Heart right ventricle (tissue), 16 donors: ENCODE measurements at regions of chr12 and their contacts with region 1.

Region 1: GRCh38 chr12:11202811-11203210 is 16.1 kb upstream of the TAS2R42 start:
- DNase-seq: no peak
- ATAC-seq: no peak
- H3K4me3 ChIP-seq: no peak overlapping the region
- H3K27ac ChIP-seq: no peak overlapping the region
- H3K4me1 ChIP-seq: no peaks in the 10 kb centered on the region
- H3K27me3 ChIP-seq: no peaks in the 10 kb centered on the region
- CTCF ChIP-seq: no peak

Region 2: DNA sequence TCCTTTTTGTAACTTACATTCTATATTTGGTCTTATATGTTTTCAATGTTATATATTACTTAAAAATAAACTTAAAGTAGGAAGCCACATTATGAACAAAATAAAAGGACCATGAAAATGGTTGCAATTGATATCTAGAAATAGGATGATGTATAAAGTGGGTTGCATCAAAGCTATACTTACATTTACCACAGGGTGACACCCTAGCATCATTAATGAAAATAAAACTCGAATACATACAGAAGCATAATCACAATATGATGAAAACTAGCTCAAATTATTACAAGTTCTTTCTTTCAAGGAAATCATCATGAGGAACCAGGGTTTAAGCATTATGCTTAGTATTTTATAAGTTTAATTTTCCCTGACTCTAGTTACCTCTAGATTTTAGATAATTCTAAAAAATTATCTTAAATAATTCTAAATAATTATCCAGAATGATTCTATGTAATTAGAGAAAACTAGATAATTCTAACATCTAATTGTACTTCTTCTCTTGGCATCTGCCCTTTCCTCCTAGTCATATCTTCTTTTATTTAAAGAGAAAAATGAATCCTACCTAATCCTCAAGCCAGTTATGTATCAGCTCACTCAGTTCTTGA is 431.6 kb before region 1 on chr12:
- intact Hi-C with region 1: loop called (anchors 2 to 5 kb)
- DNase-seq: no peak
- ATAC-seq: peak in 2 of 8 donors; percentile 51 to 64
- H3K4me3 ChIP-seq: no peak overlapping the region
- H3K27ac ChIP-seq: no peak overlapping the region
- H3K4me1 ChIP-seq: no peaks in the 10 kb centered on the region
- H3K27me3 ChIP-seq: peaks cover 0 to 74% (median 54%) of the 10 kb centered on the region in 7 donors
- CTCF ChIP-seq: peak; percentile 52 to 85 (median 70)

Region 3: GRCh38 chr12:10873378-10873777 is 329.4 kb before region 1 on chr12:
- intact Hi-C with region 1: loop called in 2 of 10 experiments (anchors 10 kb)
- DNase-seq: no peak
- ATAC-seq: no peak
- H3K4me3 ChIP-seq: no peak overlapping the region
- H3K27ac ChIP-seq: no peak overlapping the region
- H3K4me1 ChIP-seq: peaks cover 0 to 9% (median 3%) of the 10 kb centered on the region in 9 donors
- H3K27me3 ChIP-seq: no peaks in the 10 kb centered on the region
- CTCF ChIP-seq: no peak

Region 4: GRCh38 chr12:10959804-10960203 is 243.0 kb before region 1 on chr12:
- intact Hi-C with region 1: loop called in 2 of 10 experiments (anchors 5 to 10 kb)
- DNase-seq: no peak
- ATAC-seq: peak in 2 of 8 donors; percentile 59 to 74
- H3K4me3 ChIP-seq: no peak overlapping the region
- H3K27ac ChIP-seq: no peak overlapping the region
- H3K4me1 ChIP-seq: no peaks in the 10 kb centered on the region
- H3K27me3 ChIP-seq: no peaks in the 10 kb centered on the region
- CTCF ChIP-seq: peak in 5 of 9 donors; percentile 15 to 38 (median 24)

Region 5: GRCh38 chr12:10989107-10989506 is 213.7 kb before region 1 on chr12:
- intact Hi-C with region 1: no loop called
- DNase-seq: no peak
- ATAC-seq: no peak
- H3K4me3 ChIP-seq: no peak overlapping the region
- H3K27ac ChIP-seq: no peak overlapping the region
- H3K4me1 ChIP-seq: no peaks in the 10 kb centered on the region
- H3K27me3 ChIP-seq: no peaks in the 10 kb centered on the region
- CTCF ChIP-seq: no peak